ENCODE measurements at regions of chr5 and their contacts with region 1.

Region 1: DNA sequence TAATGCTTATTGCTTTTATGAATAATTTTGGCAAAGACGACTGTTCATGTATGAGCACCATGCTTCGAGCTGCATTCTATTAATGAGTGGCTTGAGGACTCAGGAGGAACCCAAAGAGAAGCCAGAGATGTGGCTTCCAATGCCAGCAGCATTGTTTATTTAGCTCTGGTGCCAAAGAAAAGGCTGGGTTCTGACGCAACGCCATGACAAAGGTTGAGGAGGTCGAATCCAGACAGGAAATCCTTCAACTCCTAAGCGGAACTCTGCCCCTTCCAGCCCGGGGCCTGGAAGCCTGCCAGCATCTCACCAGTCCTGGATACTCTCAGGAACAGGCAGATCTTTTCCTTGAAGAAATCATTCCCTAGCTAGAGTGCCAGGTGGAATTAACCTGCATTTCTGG is 104.4 kb downstream of the ARHGAP26 start:
- DNase-seq: peak; percentile 82 to 87 (median 84)
- ATAC-seq: peak; percentile 35 to 65 (median 61)
- H3K4me3 ChIP-seq: no peak overlapping the region
- H3K27ac ChIP-seq: peak overlapping the region in 10 of 12 donors; percentile 31 to 68 (median 44)
- H3K4me1 ChIP-seq: peaks cover 9 to 76% (median 60%) of the 10 kb centered on the region in 12 donors
- H3K27me3 ChIP-seq: no peaks in the 10 kb centered on the region
- CTCF ChIP-seq: no peak
- POLR2A ChIP-seq: no peak

Region 2: DNA sequence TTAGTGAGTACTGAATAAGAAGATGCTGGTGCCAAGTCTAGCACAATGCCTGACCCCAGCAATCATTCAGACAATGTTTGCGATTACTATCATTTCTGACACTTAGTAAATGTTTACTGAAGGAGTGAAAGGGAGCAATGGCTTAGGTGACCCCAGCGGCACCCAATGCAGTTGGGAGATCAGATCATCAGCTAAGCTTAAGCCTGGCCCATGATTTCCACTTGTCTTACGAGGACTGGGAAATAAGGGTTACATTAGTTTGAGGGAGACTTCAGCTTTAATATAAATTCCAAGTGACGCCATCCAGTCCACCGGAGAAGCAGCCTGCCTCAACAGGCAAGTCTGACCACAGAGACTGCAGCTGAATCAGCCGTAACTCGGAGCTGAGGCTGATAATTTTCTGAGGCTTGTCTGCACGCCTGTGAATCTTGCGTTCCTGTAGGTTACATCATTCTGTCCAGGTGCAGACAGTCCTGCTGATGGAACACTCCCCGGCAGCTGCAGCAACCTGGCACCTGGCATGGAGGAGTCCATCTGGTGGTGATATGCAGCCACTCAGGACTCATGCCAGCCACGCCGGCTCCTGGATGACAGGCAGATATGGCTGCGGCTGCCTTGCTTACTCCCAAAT is 153.8 kb before region 1 on chr5:
- intact Hi-C with region 1: loop called in 4 of 10 experiments (anchors 2 to 5 kb)
- DNase-seq: peak in 3 of 5 donors; percentile 66 to 76 (median 74)
- ATAC-seq: peak in 3 of 4 donors; percentile 14 to 41 (median 14)
- H3K4me3 ChIP-seq: no peak overlapping the region
- H3K27ac ChIP-seq: no peak overlapping the region
- H3K4me1 ChIP-seq: peaks cover 0 to 27% (median 15%) of the 10 kb centered on the region in 12 donors
- H3K27me3 ChIP-seq: no peaks in the 10 kb centered on the region
- CTCF ChIP-seq: peak in 1 of 12 donors; percentile 9
- POLR2A ChIP-seq: no peak

Region 3: DNA sequence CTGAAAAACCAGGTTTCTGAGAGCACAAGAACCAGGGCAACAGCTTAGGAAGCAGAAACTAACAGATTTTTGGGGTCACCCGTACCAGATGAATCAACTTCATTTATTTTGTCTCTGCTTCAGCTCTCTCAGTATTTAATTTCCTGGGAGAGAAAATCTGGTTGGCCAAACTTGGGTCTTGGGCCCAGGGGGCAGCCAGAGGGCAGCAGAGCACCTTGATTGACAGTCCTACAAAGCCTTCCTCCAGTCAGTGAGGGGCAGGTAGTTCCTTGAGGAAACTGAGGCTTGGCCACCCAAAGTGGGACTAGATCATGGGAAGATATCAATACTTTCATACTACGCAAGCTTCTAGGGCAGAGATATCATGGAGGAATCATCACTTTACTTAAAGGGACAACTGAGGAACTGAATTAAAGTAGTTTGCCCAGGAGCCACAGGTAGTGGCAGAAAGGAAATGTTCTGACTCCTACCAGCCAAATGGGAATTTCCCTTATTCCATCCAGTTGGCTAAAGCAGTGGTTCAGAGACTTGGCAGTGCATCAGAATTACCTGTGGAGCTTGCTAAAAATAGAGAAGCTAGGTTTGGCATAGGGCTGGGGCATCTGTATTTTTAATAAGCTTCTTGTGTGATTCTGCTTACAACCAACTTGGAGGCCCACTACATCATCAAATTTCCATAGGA is 125.8 kb before region 1 on chr5:
- intact Hi-C with region 1: loop called in 3 of 10 experiments (anchors 5 to 10 kb)
- DNase-seq: peak in 3 of 5 donors; percentile 32 to 39 (median 35)
- ATAC-seq: peak in 3 of 4 donors; percentile 29 to 32 (median 30)
- H3K4me3 ChIP-seq: no peak overlapping the region
- H3K27ac ChIP-seq: no peak overlapping the region
- H3K4me1 ChIP-seq: peaks cover 8 to 79% (median 43%) of the 10 kb centered on the region in 12 donors
- H3K27me3 ChIP-seq: no peaks in the 10 kb centered on the region
- CTCF ChIP-seq: peak; percentile 31 to 70 (median 56)
- POLR2A ChIP-seq: no peak

Region 4: GRCh38 chr5:142816531-142817430 is 57.8 kb before region 1 on chr5:
- intact Hi-C with region 1: loop called in 3 of 10 experiments (anchors 5 to 10 kb)
- DNase-seq: peak in 3 of 5 donors; percentile 68 to 75 (median 75)
- ATAC-seq: peak in 3 of 4 donors; percentile 32 to 55 (median 36)
- H3K4me3 ChIP-seq: no peak overlapping the region
- H3K27ac ChIP-seq: peak overlapping the region in 11 of 12 donors; percentile 7 to 91 (median 50)
- H3K4me1 ChIP-seq: peaks cover 12 to 90% (median 68%) of the 10 kb centered on the region in 12 donors
- H3K27me3 ChIP-seq: no peaks in the 10 kb centered on the region
- CTCF ChIP-seq: no peak
- POLR2A ChIP-seq: no peak

Measured in heart left ventricle (tissue), 16 donors.